HCT116 (cell line): ENCODE measurements at regions of chr4 and their contacts with region 1.

Region 1: GRCh38 chr4:98046665-98047064 is 96.6 kb downstream of the STPG2 start:
- DNase-seq: no peak
- ATAC-seq: no peak; the same call in 1 of the 2 replicates
- H3K4me3 ChIP-seq: no peak overlapping the region
- H3K27ac ChIP-seq: no peak overlapping the region
- H3K4me1 ChIP-seq: no peaks in the 10 kb centered on the region
- H3K27me3 ChIP-seq: no peaks in the 10 kb centered on the region
- CTCF ChIP-seq: peak in 1 of 3 experiments; percentile 16; a peak in 1 of 6 replicates
- POLR2A ChIP-seq: no peak
- RAD21 ChIP-seq: no peak

Region 2: DNA sequence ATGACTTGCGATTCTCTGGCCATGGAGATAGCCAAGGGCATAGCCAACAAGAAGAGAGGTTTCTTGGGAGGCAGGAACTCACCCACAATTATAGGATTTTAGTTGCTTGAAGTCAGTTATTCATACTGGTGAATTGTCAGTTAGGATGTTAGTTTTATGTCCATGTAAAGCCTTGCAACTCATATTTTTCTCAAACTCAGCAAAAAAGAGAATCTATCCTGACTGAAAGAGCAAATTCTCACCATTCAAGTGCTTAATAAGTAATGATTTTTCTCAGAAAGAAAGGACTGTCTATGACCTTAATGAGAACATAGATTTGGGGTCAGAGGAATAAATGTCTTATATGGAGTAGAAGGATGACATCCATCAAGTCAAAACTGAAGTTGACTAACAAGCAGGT is 837.9 kb before region 1 on chr4:
- CTCF ChIA-PET with region 1: no interaction called
- POLR2A ChIA-PET with region 1: no interaction called
- RAD21 ChIA-PET with region 1: no interaction called
- intact Hi-C with region 1: no loop called
- DNase-seq: no peak
- ATAC-seq: no peak
- H3K4me3 ChIP-seq: no peak overlapping the region
- H3K27ac ChIP-seq: no peak overlapping the region
- H3K4me1 ChIP-seq: no peaks in the 10 kb centered on the region
- H3K27me3 ChIP-seq: no peaks in the 10 kb centered on the region
- CTCF ChIP-seq: no peak
- POLR2A ChIP-seq: no peak
- RAD21 ChIP-seq: no peak

Region 3: GRCh38 chr4:98027827-98028226 is 18.8 kb before region 1 on chr4:
- CTCF ChIA-PET with region 1: interaction called, 13 read pairs
- POLR2A ChIA-PET with region 1: no interaction called
- RAD21 ChIA-PET with region 1: no interaction called
- intact Hi-C with region 1: no loop called
- DNase-seq: peak; percentile 64
- ATAC-seq: peak; percentile 98
- H3K4me3 ChIP-seq: no peak overlapping the region
- H3K27ac ChIP-seq: no peak overlapping the region
- H3K4me1 ChIP-seq: peaks cover 3 to 8% of the 10 kb centered on the region in 2 experiments; a peak in 3 of 4 replicates
- H3K27me3 ChIP-seq: no peaks in the 10 kb centered on the region
- CTCF ChIP-seq: peak; percentile 26 to 72 (median 64); a peak in 5 of 6 replicates
- POLR2A ChIP-seq: no peak
- RAD21 ChIP-seq: peak; percentile 39